ENCODE measurements at regions of chr9 and their contacts with region 1.

Region 1: DNA sequence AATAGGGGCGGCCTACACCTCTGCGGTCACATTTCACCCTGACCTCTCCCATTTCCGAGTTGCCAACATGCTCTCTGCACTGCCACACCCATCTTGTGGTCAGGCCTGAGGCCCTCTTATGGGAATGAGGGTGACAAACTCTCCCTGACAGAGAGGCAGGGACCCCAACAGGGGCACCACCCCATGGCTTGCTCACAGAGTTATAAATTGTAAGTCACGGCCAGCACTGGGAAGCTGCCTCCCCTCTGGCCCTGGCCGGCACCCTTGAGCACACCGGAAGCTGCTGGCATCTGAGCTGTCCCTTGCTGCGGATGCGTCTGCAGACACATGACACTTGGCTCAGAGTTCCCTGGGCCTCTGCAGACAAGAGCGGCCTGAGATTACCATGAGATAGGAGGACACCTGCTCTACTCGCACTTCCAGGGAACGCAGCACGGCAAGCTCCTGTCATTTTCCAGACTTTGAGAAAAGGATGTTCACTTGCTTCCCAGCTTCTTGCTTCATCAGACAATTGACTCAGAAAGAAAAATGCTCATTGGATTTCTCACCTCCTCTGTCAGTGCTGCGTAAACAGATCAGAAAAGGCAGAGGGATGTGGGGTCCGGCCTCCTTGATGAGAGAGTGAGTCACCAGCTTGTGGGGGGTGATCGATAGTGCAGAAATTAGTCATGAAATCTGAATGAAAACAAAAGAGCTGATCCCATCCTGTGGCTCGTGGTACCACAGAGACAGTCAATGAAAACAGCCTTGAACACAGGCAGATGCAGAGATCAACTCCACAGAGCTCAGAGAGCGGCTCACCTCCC is 269.8 kb downstream of the SYK start:
- DNase-seq: peak; percentile 88
- ATAC-seq: peak; percentile 97
- H3K4me3 Mint-ChIP-seq: peak overlapping the region; percentile 37
- H3K27ac Mint-ChIP-seq: peak overlapping the region; percentile 97
- H3K4me1 Mint-ChIP-seq: peaks cover 24% of the 10 kb centered on the region
- H3K27me3 Mint-ChIP-seq: peaks cover 7% of the 10 kb centered on the region

Region 2: GRCh38 chr9:90964101-90965020 is 107.0 kb before region 1 on chr9:
- CTCF ChIA-PET with region 1: no interaction called
- POLR2A ChIA-PET with region 1: interaction called, 4 read pairs
- intact Hi-C with region 1: loop called in 1 of 2 experiments (anchors 1 kb)
- DNase-seq: peak; percentile 48
- ATAC-seq: peak; percentile 47
- H3K4me3 Mint-ChIP-seq: no peak overlapping the region
- H3K27ac Mint-ChIP-seq: no peak overlapping the region
- H3K4me1 Mint-ChIP-seq: peaks cover 37% of the 10 kb centered on the region
- H3K27me3 Mint-ChIP-seq: peaks cover 26% of the 10 kb centered on the region

Region 3: GRCh38 chr9:91047993-91048607 is 23.3 kb before region 1 on chr9:
- CTCF ChIA-PET with region 1: interaction called, 4 read pairs
- POLR2A ChIA-PET with region 1: interaction called, 3 read pairs
- intact Hi-C with region 1: loop called (anchors 1 kb)
- DNase-seq: peak; percentile 75
- ATAC-seq: peak; percentile 83
- H3K4me3 Mint-ChIP-seq: peak overlapping the region; percentile 46
- H3K27ac Mint-ChIP-seq: peak overlapping the region; percentile 96
- H3K4me1 Mint-ChIP-seq: peaks cover 82% of the 10 kb centered on the region
- H3K27me3 Mint-ChIP-seq: peaks cover 23% of the 10 kb centered on the region

Region 4: DNA sequence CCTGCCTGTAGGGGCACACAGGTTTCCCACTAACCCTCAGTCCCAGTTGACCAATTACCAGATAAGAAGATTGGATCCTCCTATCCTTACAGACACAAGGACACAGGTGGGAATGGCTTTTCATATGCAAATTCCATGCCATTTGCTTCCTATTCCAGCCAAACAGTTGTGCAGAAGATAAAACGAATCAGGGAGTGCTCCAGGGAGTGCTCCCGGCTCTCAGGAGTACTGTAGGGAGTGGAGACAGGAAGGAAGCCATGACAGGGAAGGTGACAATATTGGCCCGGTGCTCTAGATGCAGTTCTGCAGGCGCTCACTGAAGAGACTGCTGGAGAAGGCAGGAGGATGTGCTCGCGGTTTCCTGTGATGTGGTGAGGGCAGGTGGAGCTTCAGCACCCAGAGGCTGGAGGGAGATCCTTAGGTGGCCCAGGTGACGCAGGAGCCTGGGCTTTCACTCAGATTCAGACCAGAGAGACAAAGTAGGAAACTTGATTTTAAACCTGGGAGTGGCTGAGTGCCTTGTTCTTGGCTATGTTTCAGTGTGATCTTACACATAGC is 30.3 kb after region 1 on chr9:
- CTCF ChIA-PET with region 1: interaction called, 12 read pairs
- POLR2A ChIA-PET with region 1: interaction called, 52 read pairs
- intact Hi-C with region 1: loop called (anchors 1 kb)
- DNase-seq: peak; percentile 96
- ATAC-seq: peak; percentile 82
- H3K4me3 Mint-ChIP-seq: peak overlapping the region; percentile 81
- H3K27ac Mint-ChIP-seq: peak overlapping the region; percentile 97
- H3K4me1 Mint-ChIP-seq: peaks cover 70% of the 10 kb centered on the region
- H3K27me3 Mint-ChIP-seq: no peaks in the 10 kb centered on the region

Region 5: GRCh38 chr9:91395553-91396471 is 324.4 kb after region 1 on chr9:
- CTCF ChIA-PET with region 1: no interaction called
- POLR2A ChIA-PET with region 1: interaction called, 3 read pairs
- intact Hi-C with region 1: loop called in 1 of 2 experiments (anchors 1 kb)
- DNase-seq: peak; percentile 42
- ATAC-seq: peak; percentile 87
- H3K4me3 Mint-ChIP-seq: peak overlapping the region; percentile 4
- H3K27ac Mint-ChIP-seq: peak overlapping the region; percentile 80
- H3K4me1 Mint-ChIP-seq: peaks cover 18% of the 10 kb centered on the region
- H3K27me3 Mint-ChIP-seq: peaks cover 10% of the 10 kb centered on the region